IMR-90 (cell line): ENCODE measurements at regions of chr16 and their contacts with region 1.

Region 1: GRCh38 chr16:25111403-25112166 is at the start of gene LCMT1:
- DNase-seq: peak; percentile 97
- ATAC-seq: peak; percentile 77
- H3K4me3 ChIP-seq: peak within 1 kb of the TSS; percentile 84
- H3K27ac ChIP-seq: peak within 1 kb of the TSS; percentile 78
- H3K4me1 ChIP-seq: peaks cover 3% of the 10 kb centered on the region
- H3K27me3 ChIP-seq: no peaks in the 10 kb centered on the region
- CTCF ChIP-seq: 0 out of 2 replicates have a peak, but pooled peaks have one; percentile 4
- POLR2A ChIP-seq: peak; percentile 63; the same call in 1 of the 2 replicates
- RAD21 ChIP-seq: no peak
- total RNA-seq, gene LCMT1: 60.0 and 60.4 TPM in 2 replicates

Region 2: DNA sequence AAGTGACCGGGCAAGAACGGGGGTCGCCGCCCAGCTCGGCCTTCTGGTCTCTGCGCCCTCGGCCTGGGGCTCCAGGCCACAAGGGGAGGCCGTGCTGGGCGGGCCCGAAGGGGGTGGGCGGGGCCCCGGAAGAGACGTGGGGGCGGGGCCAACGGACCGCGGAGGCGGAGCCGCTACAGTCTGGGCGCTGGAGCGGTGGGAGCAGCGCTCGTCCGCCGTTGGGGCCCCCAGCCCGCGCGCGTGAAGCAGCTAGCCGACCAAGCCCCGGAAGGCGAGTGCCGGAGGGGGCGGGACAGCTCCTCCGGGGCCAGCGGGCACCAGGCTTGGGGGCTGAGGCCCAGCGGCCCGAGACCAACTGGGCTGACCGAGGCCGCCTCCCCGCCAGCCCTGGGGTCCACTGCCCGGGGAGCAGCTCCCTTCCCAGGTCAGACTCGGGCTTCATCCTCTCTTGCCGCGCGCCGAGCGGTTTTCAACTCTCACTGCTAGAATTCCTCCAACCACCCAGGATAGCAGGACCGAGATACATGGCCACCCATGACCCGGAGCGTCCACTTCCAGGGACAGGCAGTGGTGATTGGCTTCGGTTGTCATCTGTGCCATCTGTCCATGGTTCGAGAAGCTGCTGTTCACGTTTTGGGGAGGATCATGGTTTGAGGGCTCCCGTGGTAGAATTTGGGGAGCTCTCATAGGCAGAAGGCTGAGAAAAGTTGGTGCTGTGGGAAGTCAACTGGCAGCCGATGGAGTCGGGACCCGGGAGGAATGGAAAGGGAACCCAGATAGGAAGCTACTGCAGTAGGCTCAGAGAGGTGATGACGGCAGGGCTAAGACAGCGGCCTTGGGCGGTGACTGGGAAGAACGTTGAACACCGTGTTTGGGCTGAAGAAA is 44.6 kb before region 1 on chr16:
- CTCF ChIA-PET with region 1: no interaction called
- POLR2A ChIA-PET with region 1: no interaction called
- dilution Hi-C with region 1: no loop called
- in situ Hi-C with region 1: no loop called
- intact Hi-C with region 1: loop called (anchors 1 kb)
- DNase-seq: peak; percentile 61
- ATAC-seq: peak; percentile 98
- H3K4me3 ChIP-seq: peak overlapping the region; percentile 49
- H3K27ac ChIP-seq: peak overlapping the region; percentile 65
- H3K4me1 ChIP-seq: peaks cover 8% of the 10 kb centered on the region
- H3K27me3 ChIP-seq: no peaks in the 10 kb centered on the region
- CTCF ChIP-seq: no peak
- POLR2A ChIP-seq: peak; percentile 49; the same call in 1 of the 2 replicates
- RAD21 ChIP-seq: no peak

Region 3: GRCh38 chr16:25087761-25088160 is 23.8 kb before region 1 on chr16:
- CTCF ChIA-PET with region 1: no interaction called
- POLR2A ChIA-PET with region 1: interaction called, 10 read pairs
- dilution Hi-C with region 1: no loop called
- in situ Hi-C with region 1: no loop called
- intact Hi-C with region 1: no loop called
- DNase-seq: peak; percentile 50
- ATAC-seq: peak; percentile 82
- H3K4me3 ChIP-seq: no peak overlapping the region
- H3K27ac ChIP-seq: no peak overlapping the region
- H3K4me1 ChIP-seq: peaks cover 9% of the 10 kb centered on the region
- H3K27me3 ChIP-seq: no peaks in the 10 kb centered on the region
- CTCF ChIP-seq: no peak
- POLR2A ChIP-seq: no peak
- RAD21 ChIP-seq: no peak